Uterus (tissue), 4 donors: ENCODE measurements at regions of chr1 and their contacts with region 1.

Region 1: GRCh38 chr1:202009326-202010179 is 834 bp upstream of the ELF3 start:
- DNase-seq: peak; percentile 73 to 79
- H3K4me3 ChIP-seq: no peak overlapping the region
- H3K27ac ChIP-seq: no peak overlapping the region
- H3K4me1 ChIP-seq: no peaks in the 10 kb centered on the region
- H3K27me3 ChIP-seq: no peaks in the 10 kb centered on the region
- CTCF ChIP-seq: peak; percentile 80 to 88 (median 82)
- POLR2A ChIP-seq: no peak

Region 2: GRCh38 chr1:202135221-202135721 is 125.7 kb after region 1 on chr1:
- intact Hi-C with region 1: loop called (anchors 5 kb)
- DNase-seq: peak; percentile 61 to 66
- H3K4me3 ChIP-seq: no peak overlapping the region
- H3K27ac ChIP-seq: peak overlapping the region; percentile 63 to 93
- H3K4me1 ChIP-seq: peaks cover 12 to 21% of the 10 kb centered on the region in 2 donors
- H3K27me3 ChIP-seq: no peaks in the 10 kb centered on the region
- CTCF ChIP-seq: peak; percentile 78 to 90 (median 85)
- POLR2A ChIP-seq: no peak